IMR-90 (cell line): ENCODE measurements at regions of chr10 and their contacts with region 1.

Region 1: DNA sequence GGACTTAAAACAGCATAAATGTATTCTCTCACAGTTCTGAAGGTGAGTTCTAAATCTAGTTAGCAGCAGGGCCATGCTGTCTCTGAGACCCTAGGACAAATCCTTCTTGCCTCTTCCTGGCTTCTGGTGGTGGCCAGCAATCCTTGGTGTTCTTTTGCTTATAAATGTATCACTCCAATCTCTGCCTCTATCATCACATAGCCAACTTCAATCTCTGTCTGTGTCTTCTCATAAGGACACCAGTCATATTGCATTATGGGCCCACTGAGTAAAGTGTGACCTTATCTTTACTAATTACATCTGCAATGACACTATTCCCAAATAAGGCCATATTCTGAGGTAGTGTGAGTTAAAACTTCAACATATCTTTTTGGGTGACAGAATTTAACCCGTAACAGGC is 778.9 kb downstream of the KCNMA1 start:
- DNase-seq: no peak
- ATAC-seq: no peak
- H3K4me3 ChIP-seq: no peak overlapping the region
- H3K27ac ChIP-seq: no peak overlapping the region
- H3K4me1 ChIP-seq: no peaks in the 10 kb centered on the region
- H3K27me3 ChIP-seq: no peaks in the 10 kb centered on the region; the same call in 1 of the 2 replicates
- CTCF ChIP-seq: no peak
- POLR2A ChIP-seq: no peak
- RAD21 ChIP-seq: no peak

Region 2: DNA sequence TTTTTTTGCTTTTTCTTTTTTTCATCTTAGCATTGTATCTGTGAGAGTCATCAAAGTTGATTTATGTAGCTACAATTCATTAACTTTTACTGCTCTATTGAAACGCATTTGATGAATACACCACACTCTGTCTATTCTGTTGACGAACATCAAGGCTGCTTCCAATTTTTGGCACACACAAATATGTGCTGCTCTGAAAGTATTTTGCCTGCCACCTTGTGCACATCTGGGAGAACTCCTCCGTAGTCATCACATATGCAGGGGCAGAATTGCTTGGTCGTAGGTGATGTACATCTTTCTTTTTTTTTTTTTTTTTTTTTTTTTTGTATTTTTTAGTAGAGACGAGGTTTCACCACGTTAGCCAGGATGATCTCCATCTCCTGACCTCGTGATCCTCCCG is 17.9 kb before region 1 on chr10:
- CTCF ChIA-PET with region 1: no interaction called
- POLR2A ChIA-PET with region 1: interaction called, 15 read pairs
- dilution Hi-C with region 1: no loop called
- in situ Hi-C with region 1: no loop called
- intact Hi-C with region 1: no loop called
- DNase-seq: no peak
- ATAC-seq: no peak
- H3K4me3 ChIP-seq: no peak overlapping the region
- H3K27ac ChIP-seq: no peak overlapping the region
- H3K4me1 ChIP-seq: no peaks in the 10 kb centered on the region
- H3K27me3 ChIP-seq: no peaks in the 10 kb centered on the region
- CTCF ChIP-seq: no peak
- POLR2A ChIP-seq: no peak
- RAD21 ChIP-seq: no peak

Region 3: GRCh38 chr10:77774940-77775391 is 916.2 kb after region 1 on chr10:
- CTCF ChIA-PET with region 1: no interaction called
- POLR2A ChIA-PET with region 1: no interaction called
- dilution Hi-C with region 1: no loop called
- in situ Hi-C with region 1: no loop called
- intact Hi-C with region 1: no loop called
- DNase-seq: peak; percentile 63
- ATAC-seq: peak; percentile 70
- H3K4me3 ChIP-seq: no peak overlapping the region
- H3K27ac ChIP-seq: no peak overlapping the region
- H3K4me1 ChIP-seq: peaks cover 12% of the 10 kb centered on the region
- H3K27me3 ChIP-seq: no peaks in the 10 kb centered on the region
- CTCF ChIP-seq: no peak
- POLR2A ChIP-seq: no peak
- RAD21 ChIP-seq: no peak